ENCODE measurements at regions of chr3 and their contacts with region 1.

Region 1: DNA sequence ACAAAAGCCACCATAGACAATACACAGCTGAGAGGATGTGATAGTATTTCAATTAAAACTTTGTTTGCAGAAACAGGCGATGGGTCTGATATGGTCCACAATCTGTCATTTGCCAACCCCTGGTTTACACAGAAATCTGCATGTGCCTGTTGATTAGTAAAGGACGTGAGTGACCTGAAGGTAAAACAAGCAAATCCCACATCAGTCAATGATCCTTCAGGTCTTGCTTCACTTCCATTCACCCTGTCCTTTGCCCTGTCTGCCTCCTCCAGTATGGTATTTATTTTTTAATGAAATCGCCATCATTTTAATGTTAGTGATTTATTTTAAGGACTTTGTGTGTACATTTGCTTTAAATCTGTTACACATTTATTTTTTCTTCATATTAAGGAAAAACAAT is 166.2 kb downstream of the FEZF2 start:
- DNase-seq: no peak
- H3K4me3 ChIP-seq: no peak overlapping the region
- H3K4me3 Mint-ChIP-seq: no peak overlapping the region
- H3K27ac Mint-ChIP-seq: no peak overlapping the region
- H3K4me1 ChIP-seq: no peaks in the 10 kb centered on the region
- H3K4me1 Mint-ChIP-seq: no peaks in the 10 kb centered on the region
- H3K27me3 ChIP-seq: no peaks in the 10 kb centered on the region
- H3K27me3 Mint-ChIP-seq: no peaks in the 10 kb centered on the region
- CTCF ChIP-seq: no peak

Region 2: GRCh38 chr3:62277450-62277849 is 70.3 kb after region 1 on chr3:
- CTCF ChIA-PET with region 1: no interaction called
- POLR2A ChIA-PET with region 1: interaction called, 10 read pairs
- intact Hi-C with region 1: no loop called
- DNase-seq: no peak
- H3K4me3 ChIP-seq: no peak overlapping the region
- H3K4me3 Mint-ChIP-seq: no peak overlapping the region
- H3K27ac Mint-ChIP-seq: no peak overlapping the region
- H3K4me1 ChIP-seq: no peaks in the 10 kb centered on the region
- H3K4me1 Mint-ChIP-seq: no peaks in the 10 kb centered on the region
- H3K27me3 ChIP-seq: no peaks in the 10 kb centered on the region
- H3K27me3 Mint-ChIP-seq: no peaks in the 10 kb centered on the region
- CTCF ChIP-seq: no peak

Region 3: DNA sequence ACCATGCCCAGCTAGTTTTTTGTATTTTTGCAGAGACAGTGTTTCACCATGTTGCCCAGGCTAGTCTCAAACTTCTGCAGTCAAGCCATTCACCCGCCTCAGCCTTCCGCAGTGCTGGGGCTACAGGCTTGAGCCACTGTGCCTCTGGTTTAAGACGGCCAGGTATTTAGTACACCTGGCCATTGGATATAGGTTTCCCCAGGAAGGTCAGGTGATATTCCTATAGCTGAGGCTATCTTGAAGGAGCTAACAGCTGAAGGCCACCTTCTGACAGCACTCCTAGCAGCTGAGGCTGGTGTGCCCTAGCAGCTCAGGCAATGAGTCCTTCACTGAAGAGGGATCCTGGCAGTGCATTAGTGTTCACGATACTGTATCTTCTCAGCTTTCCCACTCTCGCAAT is 749.9 kb after region 1 on chr3:
- CTCF ChIA-PET with region 1: interaction called, 10 read pairs
- POLR2A ChIA-PET with region 1: no interaction called
- intact Hi-C with region 1: no loop called
- DNase-seq: no peak
- H3K4me3 ChIP-seq: no peak overlapping the region
- H3K4me3 Mint-ChIP-seq: no peak overlapping the region
- H3K27ac Mint-ChIP-seq: no peak overlapping the region
- H3K4me1 ChIP-seq: no peaks in the 10 kb centered on the region
- H3K4me1 Mint-ChIP-seq: no peaks in the 10 kb centered on the region
- H3K27me3 ChIP-seq: no peaks in the 10 kb centered on the region
- H3K27me3 Mint-ChIP-seq: peaks cover 6% of the 10 kb centered on the region
- CTCF ChIP-seq: no peak